ENCODE measurements at regions of chr6 and their contacts with region 1.

Region 1: GRCh38 chr6:87257565-87257964 is 64.8 kb upstream of the SMIM8 start:
- DNase-seq: no peak
- ATAC-seq: no peak
- H3K4me3 ChIP-seq: no peak overlapping the region
- H3K27ac ChIP-seq: no peak overlapping the region
- H3K4me1 ChIP-seq: no peaks in the 10 kb centered on the region
- H3K27me3 ChIP-seq: no peaks in the 10 kb centered on the region

Region 2: DNA sequence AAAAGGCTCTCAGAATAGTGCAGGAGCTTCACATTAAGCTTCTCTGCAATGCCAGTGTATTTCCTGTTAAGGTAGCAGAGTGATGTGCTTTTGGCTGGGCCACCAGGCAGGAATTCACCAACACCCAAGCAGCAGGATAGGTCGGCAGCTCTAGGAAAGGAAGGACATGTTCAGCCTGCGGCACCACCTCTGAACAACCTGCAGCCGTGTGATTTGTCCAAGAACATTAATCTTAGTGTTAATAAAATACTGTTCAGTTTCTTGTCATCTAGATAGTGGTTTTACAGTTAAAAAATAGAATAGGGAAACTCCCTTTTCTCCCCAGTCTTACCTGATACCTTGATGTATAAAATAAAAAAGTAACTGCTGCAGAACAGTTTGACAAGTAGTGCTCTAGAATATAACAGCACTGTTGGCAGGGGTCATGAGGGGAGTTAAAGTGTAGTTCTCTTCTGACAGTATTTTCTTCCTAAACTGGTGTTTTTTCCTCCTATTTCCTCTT is 83.4 kb before region 1 on chr6:
- intact Hi-C with region 1: loop called in 1 of 2 experiments (anchors 5 kb)
- DNase-seq: no peak
- ATAC-seq: no peak
- H3K4me3 ChIP-seq: no peak overlapping the region
- H3K27ac ChIP-seq: no peak overlapping the region
- H3K4me1 ChIP-seq: peaks cover 2 to 6% of the 10 kb centered on the region in 2 donors
- H3K27me3 ChIP-seq: no peaks in the 10 kb centered on the region

Region 3: GRCh38 chr6:87366072-87366827 is 108.7 kb after region 1 on chr6:
- intact Hi-C with region 1: no loop called
- DNase-seq: no peak
- ATAC-seq: no peak
- H3K4me3 ChIP-seq: no peak overlapping the region
- H3K27ac ChIP-seq: no peak overlapping the region
- H3K4me1 ChIP-seq: no peaks in the 10 kb centered on the region
- H3K27me3 ChIP-seq: no peaks in the 10 kb centered on the region

Region 4: DNA sequence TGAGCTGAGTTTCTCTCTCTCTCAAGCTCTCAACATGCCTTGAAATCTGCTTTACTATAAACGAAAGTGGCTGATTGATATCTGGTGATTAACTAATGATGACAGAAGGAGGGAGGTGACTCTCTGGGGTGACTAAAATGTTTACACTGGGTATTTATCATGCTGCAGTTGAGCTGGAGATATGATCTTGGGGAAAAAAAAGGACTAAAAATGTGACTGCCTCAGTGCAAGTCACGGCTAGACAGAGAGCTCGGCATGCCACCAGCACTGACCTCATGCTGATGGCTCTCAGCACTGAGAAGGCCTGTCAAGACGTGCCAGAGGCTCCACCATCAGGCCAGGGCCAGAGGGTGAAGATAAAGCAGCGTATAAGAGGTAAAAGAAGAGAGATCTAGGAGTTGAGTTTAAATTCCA is 687.0 kb after region 1 on chr6:
- intact Hi-C with region 1: no loop called
- DNase-seq: peak; percentile 90 to 94
- ATAC-seq: peak; percentile 91
- H3K4me3 ChIP-seq: no peak overlapping the region
- H3K27ac ChIP-seq: peak overlapping the region; percentile 64 to 79
- H3K4me1 ChIP-seq: peaks cover 0 to 13% of the 10 kb centered on the region in 2 donors
- H3K27me3 ChIP-seq: no peaks in the 10 kb centered on the region